SK-N-SH (cell line): ENCODE measurements at regions of chr5 and their contacts with region 1.

Region 1: GRCh38 chr5:77491783-77492652 is at the start of gene WDR41:
- DNase-seq: peak; percentile 96
- H3K4me3 ChIP-seq: peak within 1 kb of the TSS; percentile 93 to 96
- H3K27ac ChIP-seq: peak within 1 kb of the TSS; percentile 90 to 95
- H3K4me1 ChIP-seq: peaks cover 5 to 7% of the 10 kb centered on the region in 2 experiments; a peak in 2 of 4 replicates
- H3K27me3 ChIP-seq: no peaks in the 10 kb centered on the region
- CTCF ChIP-seq: peak; percentile 81
- EP300 ChIP-seq: no peak
- RAD21 ChIP-seq: peak; percentile 67
- polyA plus RNA-seq, gene WDR41: 17.2 and 18.7 TPM in 2 replicates

Region 2: DNA sequence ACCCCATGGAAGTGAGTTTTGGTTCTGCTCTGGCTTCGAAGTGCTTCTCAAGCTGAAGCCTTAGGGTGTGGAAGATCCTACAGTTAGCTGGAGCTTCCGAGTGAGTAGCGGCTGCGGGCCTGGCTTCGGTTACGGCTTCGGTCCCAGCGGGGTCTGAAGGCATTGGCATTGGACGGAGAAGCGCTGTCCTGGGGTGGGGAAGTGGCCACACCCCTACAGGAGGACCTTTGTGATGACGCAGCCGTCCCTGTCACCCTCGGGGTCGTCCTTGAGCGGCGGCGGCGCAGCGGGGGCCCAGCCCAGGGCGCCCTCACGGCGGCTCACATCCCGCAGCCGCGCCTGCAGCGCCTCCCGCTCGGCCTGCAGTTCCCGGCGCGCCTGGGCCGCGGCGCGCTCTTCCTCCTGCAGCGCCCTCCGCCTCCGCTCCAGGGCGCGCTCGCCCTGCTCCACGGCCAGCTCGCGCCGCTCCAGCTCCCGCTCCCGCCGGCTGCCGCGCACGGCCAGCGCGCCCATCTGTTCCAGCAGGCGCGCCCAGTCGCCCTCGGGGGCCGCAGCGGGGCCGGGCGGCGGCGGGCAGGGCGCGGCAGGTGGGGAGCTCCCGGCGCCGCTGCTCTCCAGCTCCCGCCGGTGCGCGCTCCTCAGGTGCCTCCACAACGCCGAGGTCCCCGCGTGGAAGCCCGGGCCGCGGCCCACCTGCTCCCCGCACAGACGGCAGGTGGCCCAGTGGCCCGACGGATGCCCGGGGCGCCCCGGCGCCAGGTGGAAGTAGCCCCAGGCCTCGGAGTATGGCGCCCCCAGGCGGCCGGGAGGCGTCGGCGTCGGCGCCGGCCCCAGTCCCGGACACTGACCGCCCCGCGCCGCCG is 414.8 kb before region 1 on chr5:
- CTCF ChIA-PET with region 1: interaction called, 11 read pairs
- POLR2A ChIA-PET with region 1: no interaction called
- DNase-seq: peak; percentile 94
- H3K4me3 ChIP-seq: peak overlapping the region; percentile 52 to 53; a peak in 3 of 4 replicates
- H3K27ac ChIP-seq: no peak overlapping the region; a peak in 1 of 4 replicates
- H3K4me1 ChIP-seq: peaks cover 0 to 4% of the 10 kb centered on the region in 2 experiments; a peak in 2 of 4 replicates
- H3K27me3 ChIP-seq: no peaks in the 10 kb centered on the region
- CTCF ChIP-seq: peak; percentile 62
- EP300 ChIP-seq: no peak
- RAD21 ChIP-seq: peak; percentile 32; the same call in 1 of the 2 replicates

Region 3: DNA sequence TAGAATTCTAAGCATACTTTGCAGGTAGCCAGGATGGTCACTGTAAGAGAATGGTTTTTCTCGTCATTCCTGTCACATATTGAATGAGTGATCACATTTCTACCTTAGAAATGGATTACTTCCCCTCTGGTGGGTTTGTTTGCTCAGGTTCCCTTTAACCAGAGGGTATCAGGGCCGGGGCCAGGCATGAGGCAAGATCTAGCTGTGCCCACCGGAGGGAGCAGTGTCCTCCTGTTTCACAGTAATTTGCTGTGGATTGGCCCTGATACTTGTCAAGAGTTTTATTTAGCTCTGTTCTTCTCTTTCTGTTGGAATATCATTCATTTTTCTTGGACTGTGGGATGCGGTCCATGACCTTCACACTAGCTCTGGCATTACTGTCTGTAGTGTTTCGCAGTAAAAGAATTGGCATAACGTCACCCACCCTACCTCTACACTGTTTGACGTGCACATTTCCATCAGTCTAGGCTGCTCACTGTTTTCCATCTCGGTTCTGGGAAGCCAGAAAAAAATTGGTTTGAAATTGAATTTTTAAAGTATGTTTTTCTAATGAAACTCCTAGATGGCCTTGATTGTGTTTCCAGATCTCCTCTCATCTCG is 362.5 kb before region 1 on chr5:
- CTCF ChIA-PET with region 1: interaction called, 10 read pairs
- POLR2A ChIA-PET with region 1: no interaction called
- DNase-seq: peak; percentile 46
- H3K4me3 ChIP-seq: peak overlapping the region in 1 of 2 experiments; percentile 17; a peak in 1 of 4 replicates
- H3K27ac ChIP-seq: no peak overlapping the region
- H3K4me1 ChIP-seq: 0 out of 4 replicates have a peak, but pooled peaks cover 0 to 4% of the 10 kb centered on the region in 2 experiments
- H3K27me3 ChIP-seq: peaks cover 51% of the 10 kb centered on the region
- CTCF ChIP-seq: peak; percentile 62
- EP300 ChIP-seq: no peak
- RAD21 ChIP-seq: peak; percentile 60

Region 4: DNA sequence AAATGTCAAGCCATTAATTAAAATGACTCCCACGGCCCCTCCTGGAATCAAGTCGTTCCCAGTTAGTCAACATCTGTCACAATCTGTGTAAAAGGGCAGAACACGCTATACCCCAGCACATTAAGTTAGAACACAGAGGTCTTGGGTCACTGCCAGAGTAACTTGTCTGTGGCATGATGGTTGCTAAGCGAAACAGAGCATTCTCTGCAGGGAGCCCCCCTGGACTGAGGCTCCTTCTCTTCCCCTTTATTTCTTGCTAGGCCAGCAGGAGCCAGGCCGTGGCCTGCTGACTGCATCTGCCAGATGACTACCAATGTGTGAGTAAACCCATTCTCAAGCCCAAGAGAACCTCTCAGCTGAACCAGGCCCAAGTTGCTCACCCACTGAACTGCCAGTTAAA is 353.0 kb before region 1 on chr5:
- CTCF ChIA-PET with region 1: interaction called, 14 read pairs
- POLR2A ChIA-PET with region 1: no interaction called
- DNase-seq: peak; percentile 13
- H3K4me3 ChIP-seq: no peak overlapping the region
- H3K27ac ChIP-seq: no peak overlapping the region; a peak in 1 of 4 replicates
- H3K4me1 ChIP-seq: peaks cover 0 to 3% of the 10 kb centered on the region in 2 experiments; a peak in 1 of 4 replicates
- H3K27me3 ChIP-seq: peaks cover 48% of the 10 kb centered on the region
- CTCF ChIP-seq: no peak
- EP300 ChIP-seq: no peak
- RAD21 ChIP-seq: no peak

Region 5: GRCh38 chr5:77143998-77144836 is 347.8 kb before region 1 on chr5:
- CTCF ChIA-PET with region 1: interaction called, 17 read pairs
- POLR2A ChIA-PET with region 1: no interaction called
- DNase-seq: peak; percentile 64
- H3K4me3 ChIP-seq: no peak overlapping the region; a peak in 1 of 4 replicates
- H3K27ac ChIP-seq: no peak overlapping the region
- H3K4me1 ChIP-seq: no peaks in the 10 kb centered on the region
- H3K27me3 ChIP-seq: peaks cover 7% of the 10 kb centered on the region
- CTCF ChIP-seq: peak; percentile 85
- EP300 ChIP-seq: no peak
- RAD21 ChIP-seq: peak; percentile 95

Region 6: GRCh38 chr5:77463905-77464304 is 28.1 kb before region 1 on chr5:
- CTCF ChIA-PET with region 1: interaction called, 15 read pairs
- POLR2A ChIA-PET with region 1: no interaction called
- DNase-seq: no peak
- H3K4me3 ChIP-seq: no peak overlapping the region
- H3K27ac ChIP-seq: no peak overlapping the region
- H3K4me1 ChIP-seq: no peaks in the 10 kb centered on the region; a peak in 1 of 4 replicates
- H3K27me3 ChIP-seq: no peaks in the 10 kb centered on the region
- CTCF ChIP-seq: no peak
- EP300 ChIP-seq: no peak
- RAD21 ChIP-seq: no peak

Region 7: DNA sequence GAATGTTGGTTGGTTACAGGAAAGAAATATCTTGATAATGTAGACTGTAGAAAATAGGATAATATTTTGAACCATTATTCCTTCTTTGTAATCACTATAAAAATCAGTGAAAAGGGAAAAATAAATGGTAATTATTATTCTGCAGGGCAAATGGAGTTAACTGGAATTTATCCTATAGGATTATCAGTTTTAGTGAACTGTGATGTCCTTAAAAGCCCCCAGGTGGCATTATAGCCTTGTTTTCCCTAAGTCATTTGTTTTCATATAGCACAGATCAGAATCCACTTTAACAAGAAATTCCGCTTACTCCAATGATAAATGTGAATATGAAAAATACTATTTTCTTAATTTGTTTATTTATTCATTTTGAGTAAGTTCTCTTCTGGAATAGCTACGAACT is 26.3 kb after region 1 on chr5:
- CTCF ChIA-PET with region 1: interaction called, 17 read pairs
- POLR2A ChIA-PET with region 1: no interaction called
- DNase-seq: peak; percentile 14
- H3K4me3 ChIP-seq: no peak overlapping the region
- H3K27ac ChIP-seq: no peak overlapping the region
- H3K4me1 ChIP-seq: no peaks in the 10 kb centered on the region
- H3K27me3 ChIP-seq: no peaks in the 10 kb centered on the region; the same call in 1 of the 2 replicates
- CTCF ChIP-seq: peak; percentile 46
- EP300 ChIP-seq: no peak
- RAD21 ChIP-seq: peak; percentile 51